ENCODE measurements at regions of chr2 and their contacts with region 1.

Region 1: GRCh38 chr2:144456680-144457079 is 63.2 kb downstream of the ZEB2 start:
- DNase-seq: no peak
- H3K4me3 Mint-ChIP-seq: no peak overlapping the region
- H3K27ac Mint-ChIP-seq: no peak overlapping the region
- H3K4me1 Mint-ChIP-seq: peaks cover 73% of the 10 kb centered on the region
- H3K27me3 Mint-ChIP-seq: no peaks in the 10 kb centered on the region

Region 2: GRCh38 chr2:144198117-144198516 is 258.6 kb before region 1 on chr2:
- intact Hi-C with region 1: no loop called
- DNase-seq: no peak
- H3K4me3 Mint-ChIP-seq: no peak overlapping the region
- H3K27ac Mint-ChIP-seq: peak overlapping the region; percentile 82
- H3K4me1 Mint-ChIP-seq: peaks cover 58% of the 10 kb centered on the region
- H3K27me3 Mint-ChIP-seq: no peaks in the 10 kb centered on the region

Region 3: DNA sequence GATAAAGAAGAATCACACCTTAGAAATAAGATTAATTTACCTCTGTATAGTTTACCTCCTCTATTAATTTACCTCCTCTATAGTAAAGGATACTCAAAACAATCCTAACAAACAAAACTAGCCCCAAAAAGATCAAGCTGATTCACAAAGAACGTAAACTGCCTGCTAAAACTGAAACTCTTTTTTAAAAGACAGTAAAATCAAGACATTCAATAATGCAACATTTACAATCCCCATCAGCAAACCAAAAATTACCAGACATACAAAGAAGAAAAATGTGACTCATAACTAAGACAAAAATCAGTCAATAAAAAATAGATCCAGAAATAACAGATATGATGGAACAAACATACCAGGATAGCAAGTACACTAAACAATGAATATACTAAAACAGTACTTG is 152.5 kb before region 1 on chr2:
- intact Hi-C with region 1: no loop called
- DNase-seq: no peak
- H3K4me3 Mint-ChIP-seq: no peak overlapping the region
- H3K27ac Mint-ChIP-seq: peak overlapping the region; percentile 16
- H3K4me1 Mint-ChIP-seq: peaks cover 21% of the 10 kb centered on the region
- H3K27me3 Mint-ChIP-seq: no peaks in the 10 kb centered on the region

Region 4: DNA sequence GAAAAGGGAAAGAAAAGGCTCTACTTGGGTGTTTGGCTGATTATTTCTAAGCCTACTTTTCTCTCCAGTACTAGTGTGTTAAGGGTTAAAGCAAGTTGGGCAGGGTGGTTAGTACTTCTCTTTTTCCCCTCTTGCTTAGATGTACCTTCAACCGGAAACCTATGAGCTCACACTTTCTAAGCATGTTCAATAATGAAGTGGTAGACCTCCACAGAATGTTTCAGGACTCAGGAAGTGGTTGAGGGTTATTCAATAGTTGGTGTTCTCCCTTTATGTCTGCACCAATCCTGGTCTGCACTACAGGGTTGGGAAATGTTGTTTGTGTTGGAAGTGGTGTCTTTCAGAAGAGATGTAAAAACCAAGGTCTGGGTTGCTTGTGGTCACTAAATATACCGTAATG is 73.8 kb before region 1 on chr2:
- intact Hi-C with region 1: loop called (anchors 2 kb)
- DNase-seq: no peak
- H3K4me3 Mint-ChIP-seq: no peak overlapping the region
- H3K27ac Mint-ChIP-seq: peak overlapping the region; percentile 39
- H3K4me1 Mint-ChIP-seq: peaks cover 51% of the 10 kb centered on the region
- H3K27me3 Mint-ChIP-seq: peaks cover 2% of the 10 kb centered on the region

Region 5: DNA sequence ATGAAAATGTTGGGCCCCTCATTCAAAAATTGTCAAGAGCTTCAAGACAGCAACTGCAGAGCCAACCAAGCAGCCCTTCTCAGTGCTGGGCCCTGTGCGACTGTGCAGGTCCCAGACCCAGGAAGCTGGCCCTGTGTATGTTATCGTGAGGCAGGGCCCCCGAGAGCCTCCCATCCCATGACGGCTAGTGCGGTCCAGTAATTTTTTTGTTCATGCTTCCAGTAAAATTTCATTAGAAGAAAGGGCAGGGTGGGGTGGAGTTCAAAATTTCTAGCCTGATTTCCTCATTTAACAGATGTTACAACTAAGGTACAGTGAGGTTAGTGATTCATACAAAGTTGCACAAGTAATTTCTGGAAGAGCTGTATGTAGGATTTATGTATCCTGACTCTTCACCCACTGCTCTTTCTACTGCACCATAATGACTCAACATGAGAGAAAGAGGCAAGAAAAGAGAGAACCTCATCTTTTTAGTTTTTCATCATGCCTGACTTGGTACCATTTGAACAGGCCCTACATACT is 42.3 kb before region 1 on chr2:
- intact Hi-C with region 1: loop called (anchors 1 kb)
- DNase-seq: no peak
- H3K4me3 Mint-ChIP-seq: no peak overlapping the region
- H3K27ac Mint-ChIP-seq: peak overlapping the region; percentile 81
- H3K4me1 Mint-ChIP-seq: peaks cover 24% of the 10 kb centered on the region
- H3K27me3 Mint-ChIP-seq: no peaks in the 10 kb centered on the region

Region 6: DNA sequence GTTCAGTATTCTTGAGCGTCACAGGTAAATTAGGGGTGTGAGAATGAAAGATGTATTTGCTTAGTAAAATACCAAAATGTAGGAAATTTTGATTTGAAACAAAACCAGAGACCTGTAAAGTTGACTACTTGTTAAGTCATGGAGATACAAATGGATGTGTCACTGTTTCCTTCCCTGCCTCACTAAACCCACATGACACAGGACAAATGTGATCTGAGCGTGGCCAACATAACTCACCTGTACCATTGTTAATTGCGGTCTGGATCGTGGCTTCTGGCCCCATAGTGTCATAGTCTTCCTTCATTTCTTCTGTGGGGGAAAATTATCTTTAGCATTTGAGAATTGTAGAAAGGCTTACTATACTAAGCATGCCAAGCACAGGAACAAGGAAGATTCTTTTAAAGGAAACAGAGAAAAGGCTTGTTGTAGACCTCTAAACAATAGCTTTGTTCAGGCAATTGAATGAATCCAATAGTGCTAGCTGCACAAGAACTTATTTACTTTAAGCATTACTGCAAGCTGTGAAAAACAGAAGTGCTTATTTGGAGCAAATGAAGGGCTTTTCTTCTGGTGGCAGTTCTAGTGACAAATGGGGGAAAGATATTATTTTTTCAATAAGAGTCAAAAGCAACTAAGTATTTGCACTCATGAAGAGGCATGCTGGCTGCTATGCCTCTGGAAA is 32.0 kb before region 1 on chr2:
- intact Hi-C with region 1: loop called (anchors 2 kb)
- DNase-seq: no peak
- H3K4me3 Mint-ChIP-seq: no peak overlapping the region
- H3K27ac Mint-ChIP-seq: peak overlapping the region; percentile 36
- H3K4me1 Mint-ChIP-seq: peaks cover 20% of the 10 kb centered on the region
- H3K27me3 Mint-ChIP-seq: no peaks in the 10 kb centered on the region

Region 7: DNA sequence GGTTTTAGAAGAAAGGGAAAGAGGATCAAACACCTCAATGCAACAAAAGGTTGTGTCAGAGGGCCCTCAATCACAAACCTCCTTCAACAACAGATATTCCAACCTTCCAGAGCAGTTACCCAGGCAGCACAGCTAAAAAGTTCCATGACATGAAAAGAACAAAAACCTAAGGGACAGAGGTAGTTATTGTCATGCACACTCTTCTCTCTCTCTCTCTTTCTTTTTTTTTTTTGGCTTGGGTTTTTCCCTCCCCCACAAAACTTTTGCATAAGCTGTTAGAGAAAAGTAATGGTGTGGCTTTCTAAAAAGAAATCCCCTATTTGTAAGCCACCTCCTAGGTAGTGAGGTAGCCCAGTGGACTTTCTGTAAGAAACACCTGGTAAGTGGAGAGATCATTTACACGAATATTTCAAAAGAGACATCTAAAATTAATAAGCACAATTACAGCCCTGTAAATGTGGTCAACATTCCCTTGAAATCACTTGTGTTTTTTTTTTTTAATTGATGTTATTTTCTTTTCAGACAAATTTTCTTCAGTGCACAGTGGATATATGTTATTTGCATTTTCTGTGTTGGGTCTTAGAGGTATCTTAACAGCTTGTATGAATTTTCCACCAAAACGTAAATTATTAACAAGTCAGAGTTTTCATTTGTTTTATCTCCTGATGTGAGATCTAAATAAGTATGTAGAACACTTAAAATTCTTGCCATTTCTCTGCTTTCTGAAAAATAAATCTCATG is 14.8 kb after region 1 on chr2:
- intact Hi-C with region 1: loop called (anchors 2 kb)
- DNase-seq: no peak
- H3K4me3 Mint-ChIP-seq: peak overlapping the region; percentile 13
- H3K27ac Mint-ChIP-seq: peak overlapping the region; percentile 67
- H3K4me1 Mint-ChIP-seq: peaks cover 20% of the 10 kb centered on the region
- H3K27me3 Mint-ChIP-seq: peaks cover 2% of the 10 kb centered on the region

Region 8: DNA sequence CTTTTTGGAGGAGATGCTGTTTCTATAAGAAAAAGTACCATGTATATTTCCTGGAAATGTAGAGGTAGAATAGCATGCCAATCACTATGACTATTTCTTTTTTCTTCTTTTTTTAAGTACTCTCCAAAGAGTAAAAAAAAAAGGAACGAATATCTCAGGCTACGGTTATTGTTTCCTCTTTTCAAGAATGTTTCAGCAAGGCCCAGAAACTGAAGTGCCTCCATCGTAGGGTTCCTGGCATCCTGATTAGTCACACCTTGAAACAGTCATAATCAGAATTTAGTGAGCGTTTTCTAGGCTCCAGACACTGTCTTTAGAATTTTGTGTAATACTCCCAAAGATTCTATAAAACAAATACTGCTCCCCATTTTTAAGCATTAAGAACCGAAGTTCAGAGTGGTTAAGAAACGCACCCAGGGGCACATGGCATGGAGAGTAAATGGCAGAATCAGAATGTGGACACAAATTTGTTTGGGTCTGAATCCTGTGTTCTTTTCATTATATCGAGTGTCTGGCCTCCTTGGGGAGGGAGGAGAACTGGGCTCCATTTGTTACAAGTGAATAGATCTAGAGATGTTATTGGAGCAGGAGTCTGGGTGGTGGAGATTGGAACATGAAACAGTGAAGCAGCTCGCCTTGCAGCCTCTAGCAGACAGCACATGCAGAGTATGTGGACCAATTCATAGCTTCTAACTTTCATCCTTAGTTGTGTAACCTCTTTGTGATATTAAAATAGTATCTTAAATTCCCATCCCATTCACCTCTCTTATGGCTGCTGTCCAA is 36.5 kb after region 1 on chr2:
- intact Hi-C with region 1: loop called (anchors 5 kb)
- DNase-seq: no peak
- H3K4me3 Mint-ChIP-seq: no peak overlapping the region
- H3K27ac Mint-ChIP-seq: peak overlapping the region; percentile 55
- H3K4me1 Mint-ChIP-seq: peaks cover 33% of the 10 kb centered on the region
- H3K27me3 Mint-ChIP-seq: no peaks in the 10 kb centered on the region

Measured in activated T-helper 2 cell treated with anti-CD3 and anti-CD28 coated beads, Interferon-gamma antibody, Interleukin-2, Interleukin-4, amounts not matched to agents 10 μg/mL and 5 μg/mL and 100 μg/mL, durations not matched to agents 14 hours and 24 hours and 36 hours (primary cell).